ENCODE measurements at regions of chr12 and their contacts with region 1.

Region 1: GRCh38 chr12:77274926-77275325 is 209.6 kb upstream of the E2F7 start:
- DNase-seq: no peak
- H3K4me3 ChIP-seq: no peak overlapping the region
- H3K27ac ChIP-seq: no peak overlapping the region
- H3K4me1 ChIP-seq: no peaks in the 10 kb centered on the region
- H3K27me3 ChIP-seq: no peaks in the 10 kb centered on the region
- CTCF ChIP-seq: no peak
- EP300 ChIP-seq: no peak
- POLR2A ChIP-seq: no peak

Region 2: GRCh38 chr12:76909290-76909689 is 365.6 kb before region 1 on chr12:
- intact Hi-C with region 1: loop called in 1 of 4 experiments (anchors 5 kb)
- DNase-seq: no peak
- H3K4me3 ChIP-seq: no peak overlapping the region
- H3K27ac ChIP-seq: no peak overlapping the region
- H3K4me1 ChIP-seq: peaks cover 2% of the 10 kb centered on the region
- H3K27me3 ChIP-seq: no peaks in the 10 kb centered on the region
- CTCF ChIP-seq: no peak
- EP300 ChIP-seq: no peak
- POLR2A ChIP-seq: no peak

Region 3: DNA sequence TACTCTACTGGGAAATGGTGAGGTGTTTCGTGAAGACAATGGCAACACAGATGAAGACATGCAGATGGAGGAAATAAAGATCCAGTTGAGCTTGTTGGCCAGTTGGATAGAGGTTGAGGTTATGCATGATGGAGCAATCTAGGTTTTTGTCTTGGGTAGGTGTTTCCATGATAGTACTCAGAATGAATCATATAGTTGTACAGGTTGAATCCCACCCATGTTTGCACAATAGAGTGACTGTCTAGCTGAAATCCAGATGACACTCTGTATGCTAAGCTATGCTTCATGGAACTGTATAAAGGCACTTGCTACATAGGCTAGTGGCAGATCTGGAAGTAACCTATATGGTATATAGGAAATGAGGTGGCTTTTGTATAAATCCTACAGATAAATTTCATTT is 820.7 kb after region 1 on chr12:
- intact Hi-C with region 1: loop called in 1 of 4 experiments (anchors 2 kb)
- DNase-seq: no peak
- H3K4me3 ChIP-seq: no peak overlapping the region
- H3K27ac ChIP-seq: no peak overlapping the region
- H3K4me1 ChIP-seq: peaks cover 3% of the 10 kb centered on the region
- H3K27me3 ChIP-seq: peaks cover 4% of the 10 kb centered on the region
- CTCF ChIP-seq: no peak
- EP300 ChIP-seq: no peak
- POLR2A ChIP-seq: no peak